ENCODE measurements at regions of chr9 and their contacts with region 1.

Region 1: GRCh38 chr9:17994700-17995430 is 416.0 kb downstream of the SH3GL2 start:
- DNase-seq: no peak

Region 2: GRCh38 chr9:17322882-17323864 is 671.7 kb before region 1 on chr9:
- intact Hi-C with region 1: loop called in 1 of 2 experiments (anchors 5 kb)
- DNase-seq: no peak

Measured in posterior vena cava (tissue), 2 donors.